HEK293 (cell line): ENCODE measurements at regions of chr20 and their contacts with region 1.

Region 1: DNA sequence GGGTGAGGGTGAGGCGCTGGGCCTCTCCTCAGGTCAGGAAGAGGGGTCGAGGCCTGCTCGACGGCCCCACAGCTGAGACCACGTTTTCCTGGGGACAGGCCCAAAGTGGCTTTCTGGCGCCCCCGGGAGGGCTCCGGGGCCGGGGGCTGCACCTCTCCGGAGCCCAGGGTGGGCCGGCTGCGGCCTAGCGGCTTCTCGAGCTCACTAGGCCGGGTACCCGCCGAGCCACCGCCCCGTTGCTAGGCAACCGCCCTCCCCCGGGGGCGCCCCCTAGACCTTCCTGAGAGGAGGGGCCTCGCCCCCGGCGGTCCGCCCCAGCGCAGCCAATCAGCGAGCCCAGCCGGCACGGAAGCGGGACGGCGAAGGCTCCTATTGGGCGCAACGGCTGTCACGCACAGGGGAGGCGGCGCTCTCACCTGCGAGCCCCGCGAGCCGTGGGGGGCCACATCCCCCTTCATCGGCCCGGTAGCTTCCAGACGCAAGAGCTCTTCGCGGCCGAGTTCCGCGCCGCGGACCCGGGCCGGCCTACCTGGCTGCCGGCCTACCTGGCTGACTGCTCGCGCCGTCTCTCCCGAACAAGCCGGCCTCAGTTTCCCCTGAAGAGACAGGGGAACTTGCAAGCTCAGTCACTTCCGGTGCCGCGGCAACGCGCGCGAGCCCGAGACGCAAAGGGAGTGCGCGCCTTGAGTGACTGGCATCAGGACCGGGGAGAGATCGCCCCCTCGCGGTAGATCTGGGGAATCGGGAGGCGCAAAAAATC is 831 bp upstream of the BCL2L1 start:
- H3K4me3 ChIP-seq: peak overlapping the region; percentile 94
- H3K27ac ChIP-seq: peak overlapping the region; percentile 95
- H3K4me1 ChIP-seq: peaks cover 8% of the 10 kb centered on the region; the same call in 1 of the 2 replicates
- CTCF ChIP-seq: peak; percentile 81

Region 2: GRCh38 chr20:31560094-31560899 is 163.2 kb before region 1 on chr20:
- CTCF ChIA-PET with region 1: interaction called, 57 read pairs
- POLR2A ChIA-PET with region 1: interaction called, 3 read pairs
- H3K4me3 ChIP-seq: no peak overlapping the region
- H3K27ac ChIP-seq: no peak overlapping the region
- H3K4me1 ChIP-seq: no peaks in the 10 kb centered on the region
- CTCF ChIP-seq: peak; percentile 68

Region 3: GRCh38 chr20:31630187-31630790 is 93.2 kb before region 1 on chr20:
- CTCF ChIA-PET with region 1: interaction called, 66 read pairs
- POLR2A ChIA-PET with region 1: interaction called, 17 read pairs
- H3K4me3 ChIP-seq: no peak overlapping the region
- H3K27ac ChIP-seq: no peak overlapping the region
- H3K4me1 ChIP-seq: no peaks in the 10 kb centered on the region
- CTCF ChIP-seq: no peak

Region 4: DNA sequence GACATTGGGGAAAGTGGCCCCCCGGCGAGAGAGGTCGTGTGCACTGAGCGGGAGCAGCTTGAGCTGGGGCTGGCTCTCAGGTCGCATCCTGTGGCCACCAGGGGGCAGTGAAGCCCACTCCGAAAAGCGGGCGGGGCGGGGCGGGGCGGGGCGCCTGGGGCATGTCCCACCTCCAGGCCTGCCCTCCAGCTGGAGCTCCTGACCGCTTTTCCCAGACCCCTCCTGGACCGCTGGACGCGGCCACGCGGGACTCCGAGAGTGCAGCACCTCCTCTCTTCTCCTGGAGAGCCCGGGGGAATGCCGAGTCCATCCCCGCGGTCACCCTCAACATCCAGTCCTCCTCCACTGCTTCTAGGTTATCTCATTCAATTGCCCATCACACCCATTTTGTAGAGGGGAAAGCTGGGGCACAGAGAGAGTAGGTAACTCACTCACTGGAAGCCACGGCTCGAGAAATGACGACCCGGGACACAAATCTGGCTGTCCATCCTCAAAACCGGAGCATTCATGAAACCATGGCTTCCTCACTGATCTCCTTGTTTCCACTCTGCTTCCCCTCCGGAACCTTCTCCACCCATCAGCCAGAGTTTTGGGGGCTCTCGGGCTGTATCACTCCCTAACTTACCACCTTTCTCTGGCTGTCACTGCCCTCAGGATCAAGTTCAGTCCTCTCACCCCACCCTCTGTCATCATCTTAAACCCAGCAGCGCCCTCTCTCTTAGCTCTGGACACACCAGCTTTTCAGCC is 61.7 kb before region 1 on chr20:
- CTCF ChIA-PET with region 1: interaction called, 303 read pairs
- POLR2A ChIA-PET with region 1: interaction called, 98 read pairs
- H3K4me3 ChIP-seq: peak overlapping the region; percentile 23
- H3K27ac ChIP-seq: no peak overlapping the region
- H3K4me1 ChIP-seq: no peaks in the 10 kb centered on the region
- CTCF ChIP-seq: peak; percentile 76

Region 5: GRCh38 chr20:31698803-31699718 is 24.4 kb before region 1 on chr20:
- CTCF ChIA-PET with region 1: interaction called, 40 read pairs
- POLR2A ChIA-PET with region 1: interaction called, 9 read pairs
- H3K4me3 ChIP-seq: no peak overlapping the region
- H3K27ac ChIP-seq: no peak overlapping the region
- H3K4me1 ChIP-seq: peaks cover 3% of the 10 kb centered on the region; the same call in 1 of the 2 replicates
- CTCF ChIP-seq: no peak

Region 6: GRCh38 chr20:31738729-31739561 is 15.4 kb after region 1 on chr20 and contains the start of gene TPX2:
- CTCF ChIA-PET with region 1: interaction called, 24 read pairs
- POLR2A ChIA-PET with region 1: interaction called, 22 read pairs
- H3K4me3 ChIP-seq: peak within 1 kb of the TSS; percentile 73
- H3K27ac ChIP-seq: peak within 1 kb of the TSS; percentile 75
- H3K4me1 ChIP-seq: no peaks in the 10 kb centered on the region; the same call in 1 of the 2 replicates
- CTCF ChIP-seq: peak; percentile 91

Region 7: GRCh38 chr20:31781945-31782344 is 58.4 kb after region 1 on chr20:
- CTCF ChIA-PET with region 1: no interaction called
- POLR2A ChIA-PET with region 1: no interaction called
- H3K4me3 ChIP-seq: no peak overlapping the region
- H3K27ac ChIP-seq: no peak overlapping the region
- H3K4me1 ChIP-seq: no peaks in the 10 kb centered on the region
- CTCF ChIP-seq: no peak

Region 8: DNA sequence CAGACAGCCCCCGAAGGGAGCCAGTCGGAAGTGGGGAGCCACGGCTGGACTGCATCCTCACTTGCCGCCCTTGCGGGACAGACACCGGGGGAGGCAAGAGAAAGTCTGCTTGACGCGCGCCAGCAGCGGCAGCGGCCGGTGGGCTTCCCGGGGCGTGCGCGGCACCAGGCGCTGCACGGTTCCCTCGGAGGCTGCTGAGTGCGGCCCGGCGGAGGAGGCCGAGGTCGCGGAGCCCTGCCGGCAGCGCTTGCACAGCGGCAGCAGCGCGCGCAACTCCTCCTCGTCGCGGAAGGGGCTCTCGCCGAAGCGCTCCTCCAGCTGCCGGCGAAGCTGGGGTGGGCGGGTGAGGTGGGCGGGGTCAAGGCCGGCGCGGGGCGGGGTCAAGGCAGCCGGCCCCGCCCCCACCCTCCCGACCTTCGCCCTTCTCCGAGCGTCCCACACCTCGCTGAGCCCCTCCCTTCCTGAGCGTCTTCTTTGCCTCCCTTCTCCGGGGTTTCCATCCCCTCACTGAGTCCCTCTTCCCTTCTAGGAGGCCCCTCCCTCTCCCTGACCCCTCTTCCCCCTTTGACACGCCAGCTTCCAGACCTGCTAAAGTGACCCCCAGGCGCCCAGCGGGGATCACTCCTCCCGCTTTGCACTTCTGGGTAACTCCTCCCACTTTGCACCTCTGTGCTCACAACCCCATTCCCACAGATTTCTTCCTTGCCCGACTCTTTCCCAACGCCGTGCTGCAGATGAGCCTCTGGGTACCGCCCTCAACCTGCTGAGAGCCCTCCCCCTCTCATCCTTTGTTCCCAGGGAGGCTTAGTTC is 138.1 kb after region 1 on chr20:
- CTCF ChIA-PET with region 1: no interaction called
- POLR2A ChIA-PET with region 1: no interaction called
- H3K4me3 ChIP-seq: peak overlapping the region; percentile 38
- H3K27ac ChIP-seq: no peak overlapping the region
- H3K4me1 ChIP-seq: 0 out of 2 replicates have a peak, but pooled peaks cover 2% of the 10 kb centered on the region
- CTCF ChIP-seq: no peak

Region 9: DNA sequence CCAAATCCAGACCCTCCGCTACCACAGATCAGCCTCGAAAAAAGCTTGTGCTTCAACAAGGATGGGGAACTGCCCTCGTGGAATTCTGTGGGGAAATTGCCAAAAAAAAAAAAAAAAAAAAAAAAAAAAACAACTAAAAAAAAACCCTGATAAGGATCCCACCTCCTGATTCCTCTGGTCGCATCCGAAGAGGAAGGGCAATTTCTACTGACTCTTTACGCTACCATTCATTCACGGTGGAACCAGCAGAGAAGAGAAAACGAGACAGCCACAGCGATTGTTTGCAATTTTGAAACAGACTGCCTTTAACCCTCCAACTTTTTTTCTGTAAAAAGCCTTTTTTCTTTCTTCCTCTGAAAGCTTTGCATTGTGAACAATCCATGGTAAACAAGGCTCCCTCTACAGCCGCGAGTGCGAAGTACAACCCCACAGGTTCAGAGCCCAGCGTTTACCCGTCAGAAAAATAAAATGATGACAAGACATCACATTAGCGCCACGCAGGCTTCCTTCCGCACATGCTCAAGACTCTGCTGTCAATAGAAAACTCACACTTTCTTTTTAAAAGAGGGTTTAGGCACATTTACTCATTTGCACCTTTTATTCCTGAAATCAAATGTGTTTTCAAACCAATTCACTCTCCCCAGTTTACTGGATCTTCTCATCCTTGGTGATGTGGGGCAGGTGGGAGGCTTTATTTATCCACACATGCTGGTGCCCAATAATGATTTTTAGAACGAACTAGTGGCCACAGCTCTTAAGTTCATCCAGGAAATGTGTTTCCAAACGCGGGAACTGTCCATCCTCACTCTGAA is 761.7 kb after region 1 on chr20:
- CTCF ChIA-PET with region 1: no interaction called
- POLR2A ChIA-PET with region 1: no interaction called
- H3K4me3 ChIP-seq: peak overlapping the region; percentile 72
- H3K27ac ChIP-seq: peak overlapping the region; percentile 56; the same call in 1 of the 2 replicates
- H3K4me1 ChIP-seq: peaks cover 3% of the 10 kb centered on the region; the same call in 1 of the 2 replicates
- CTCF ChIP-seq: 0 out of 2 replicates have a peak, but pooled peaks have one; percentile 26